ENCODE measurements at regions of chr22 and their contacts with region 1.

Region 1: GRCh38 chr22:24175160-24175808 is 6.0 kb upstream of the SUSD2 start:
- DNase-seq: peak; percentile 70
- ATAC-seq: peak; percentile 56
- H3K4me3 Mint-ChIP-seq: no peak overlapping the region
- H3K27ac Mint-ChIP-seq: no peak overlapping the region
- H3K4me1 Mint-ChIP-seq: no peaks in the 10 kb centered on the region
- H3K27me3 Mint-ChIP-seq: no peaks in the 10 kb centered on the region

Region 2: DNA sequence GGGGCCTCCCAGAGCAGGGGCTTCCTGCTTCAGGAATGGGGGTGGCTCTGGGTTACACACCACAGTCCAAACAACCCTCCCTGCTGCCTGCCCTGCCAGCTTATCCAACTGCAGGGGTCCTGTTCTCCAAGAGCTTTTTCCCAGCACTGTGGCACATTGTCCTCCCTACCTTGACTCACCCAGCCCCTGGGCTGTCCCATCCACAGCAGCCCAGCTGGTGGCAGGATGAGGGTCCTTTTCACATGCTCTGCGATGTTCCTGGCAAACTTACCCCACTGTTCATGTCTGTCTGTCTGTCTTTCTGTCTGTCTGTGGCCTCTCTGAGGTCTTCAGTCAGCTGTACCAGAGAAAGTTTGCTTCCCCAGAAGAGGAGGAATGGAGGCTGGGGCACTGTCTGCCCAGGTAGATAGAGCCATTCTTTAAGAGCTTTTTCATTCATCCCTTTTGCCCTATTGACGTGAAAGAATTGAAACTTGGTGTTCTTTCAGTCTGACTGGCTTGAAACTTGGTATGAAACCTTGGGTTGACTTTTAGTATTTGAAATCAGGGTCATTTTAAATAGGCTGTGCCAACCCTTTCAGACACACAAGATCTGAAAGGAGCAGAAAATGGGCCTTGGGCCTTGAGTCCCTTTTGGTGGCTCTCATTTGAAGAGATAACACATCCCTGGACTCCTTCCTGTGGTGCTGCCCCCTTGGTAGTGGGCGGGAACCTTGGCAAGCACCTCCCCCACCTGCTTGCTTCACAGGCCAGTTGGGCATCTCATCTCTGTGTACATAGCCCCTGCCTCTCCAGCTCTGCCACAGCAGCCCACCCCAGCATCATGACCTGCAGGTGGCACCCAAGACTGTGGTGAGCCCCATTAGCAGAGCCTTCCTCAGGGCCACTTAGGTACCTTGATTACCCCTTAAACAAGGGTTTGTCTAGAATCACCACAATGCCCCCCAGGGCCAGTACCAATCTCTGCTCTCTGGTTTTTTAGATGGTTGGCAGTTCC is 68.6 kb before region 1 on chr22:
- CTCF ChIA-PET with region 1: interaction called, 35 read pairs
- POLR2A ChIA-PET with region 1: no interaction called
- DNase-seq: peak; percentile 39
- ATAC-seq: peak; percentile 52
- H3K4me3 Mint-ChIP-seq: no peak overlapping the region
- H3K27ac Mint-ChIP-seq: peak overlapping the region; percentile 52
- H3K4me1 Mint-ChIP-seq: peaks cover 36% of the 10 kb centered on the region
- H3K27me3 Mint-ChIP-seq: no peaks in the 10 kb centered on the region

Region 3: DNA sequence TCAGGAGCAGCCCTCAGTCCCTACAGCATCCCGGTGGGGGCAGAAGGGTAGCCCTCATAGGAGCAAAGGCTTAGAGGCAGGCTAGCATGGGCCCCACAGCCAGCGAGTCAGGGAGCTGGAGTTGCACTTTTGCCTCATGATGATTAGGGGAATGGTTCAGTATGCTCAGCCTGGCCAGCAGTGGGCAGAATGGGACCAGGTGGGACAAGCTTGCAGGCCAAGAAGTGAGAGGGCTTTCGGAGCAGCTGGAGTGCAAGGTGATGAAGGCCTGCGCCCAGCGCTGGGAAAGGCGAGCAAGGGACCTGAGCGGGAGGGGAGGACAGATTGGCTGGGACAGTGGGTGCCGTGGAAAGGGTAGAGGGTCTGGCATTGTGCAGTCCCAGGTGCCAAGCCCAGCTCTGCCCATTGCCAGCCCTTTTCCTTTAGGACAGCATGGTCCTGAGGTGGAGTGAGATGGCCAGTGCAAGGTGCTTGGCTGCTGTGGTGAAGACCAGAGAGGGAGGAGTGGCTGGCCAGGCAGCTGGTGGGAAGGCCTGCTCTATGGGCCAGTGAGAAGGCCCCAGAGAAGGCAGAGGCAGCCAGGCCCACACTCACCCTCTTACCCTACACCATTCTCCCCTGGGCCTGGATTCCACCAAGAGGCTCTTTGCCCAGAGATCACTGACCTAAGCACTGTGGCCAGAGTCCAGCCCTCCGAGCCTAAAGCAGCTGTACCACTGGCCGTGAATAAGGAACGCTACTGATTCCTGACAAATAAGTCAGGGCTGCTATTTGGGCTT is 41.9 kb before region 1 on chr22:
- CTCF ChIA-PET with region 1: interaction called, 47 read pairs
- POLR2A ChIA-PET with region 1: interaction called, 3 read pairs
- DNase-seq: peak; percentile 57
- ATAC-seq: peak; percentile 44
- H3K4me3 Mint-ChIP-seq: no peak overlapping the region
- H3K27ac Mint-ChIP-seq: peak overlapping the region; percentile 71
- H3K4me1 Mint-ChIP-seq: peaks cover 32% of the 10 kb centered on the region
- H3K27me3 Mint-ChIP-seq: no peaks in the 10 kb centered on the region